A673 (cell line): ENCODE measurements at regions of chr5 and their contacts with region 1.

Region 1: GRCh38 chr5:168604436-168604835 is 25.3 kb upstream of the PANK3 start:
- DNase-seq: no peak
- H3K4me3 ChIP-seq: no peak overlapping the region
- H3K27ac ChIP-seq: no peak overlapping the region
- H3K4me1 ChIP-seq: no peaks in the 10 kb centered on the region
- H3K27me3 ChIP-seq: no peaks in the 10 kb centered on the region
- CTCF ChIP-seq: no peak

Region 2: GRCh38 chr5:168234133-168234532 is 370.3 kb before region 1 on chr5:
- CTCF ChIA-PET with region 1: no interaction called
- POLR2A ChIA-PET with region 1: no interaction called
- intact Hi-C with region 1: no loop called
- DNase-seq: no peak
- H3K4me3 ChIP-seq: no peak overlapping the region
- H3K27ac ChIP-seq: no peak overlapping the region
- H3K4me1 ChIP-seq: peaks cover 10% of the 10 kb centered on the region
- H3K27me3 ChIP-seq: no peaks in the 10 kb centered on the region
- CTCF ChIP-seq: no peak

Region 3: GRCh38 chr5:169083394-169084018 is 479.1 kb after region 1 on chr5:
- CTCF ChIA-PET with region 1: no interaction called
- POLR2A ChIA-PET with region 1: interaction called, 15 read pairs
- intact Hi-C with region 1: no loop called
- DNase-seq: no peak
- H3K4me3 ChIP-seq: no peak overlapping the region
- H3K27ac ChIP-seq: no peak overlapping the region
- H3K4me1 ChIP-seq: no peaks in the 10 kb centered on the region
- H3K27me3 ChIP-seq: no peaks in the 10 kb centered on the region
- CTCF ChIP-seq: no peak